Thyroid gland (tissue), 4 donors: ENCODE measurements at regions of chr15 and their contacts with region 1.

Region 1: GRCh38 chr15:99213187-99213811 is 36.1 kb downstream of the TTC23 start:
- DNase-seq: peak; percentile 82 to 88
- H3K4me3 ChIP-seq: no peak overlapping the region
- H3K27ac ChIP-seq: no peak overlapping the region
- H3K4me1 ChIP-seq: no peaks in the 10 kb centered on the region
- H3K27me3 ChIP-seq: no peaks in the 10 kb centered on the region
- CTCF ChIP-seq: peak; percentile 78 to 93 (median 88)
- POLR2A ChIP-seq: no peak

Region 2: GRCh38 chr15:99104788-99105513 is 108.3 kb before region 1 on chr15 and contains the start of gene SYNM:
- intact Hi-C with region 1: loop called (anchors 2 kb)
- DNase-seq: peak; percentile 71 to 76
- H3K4me3 ChIP-seq: peak within 1 kb of the TSS; percentile 32 to 61 (median 58)
- H3K27ac ChIP-seq: peak within 1 kb of the TSS in 2 of 3 donors; percentile 67 to 78
- H3K4me1 ChIP-seq: peaks cover 8 to 14% of the 10 kb centered on the region in 2 donors
- H3K27me3 ChIP-seq: no peaks in the 10 kb centered on the region
- CTCF ChIP-seq: peak; percentile 22 to 98 (median 76)
- POLR2A ChIP-seq: peak in 1 of 2 donors; percentile 80
- total RNA-seq, gene SYNM: 14.8 to 24.8 (median 21.5) TPM